A673 (cell line): ENCODE measurements at regions of chr10 and their contacts with region 1.

Region 1: DNA sequence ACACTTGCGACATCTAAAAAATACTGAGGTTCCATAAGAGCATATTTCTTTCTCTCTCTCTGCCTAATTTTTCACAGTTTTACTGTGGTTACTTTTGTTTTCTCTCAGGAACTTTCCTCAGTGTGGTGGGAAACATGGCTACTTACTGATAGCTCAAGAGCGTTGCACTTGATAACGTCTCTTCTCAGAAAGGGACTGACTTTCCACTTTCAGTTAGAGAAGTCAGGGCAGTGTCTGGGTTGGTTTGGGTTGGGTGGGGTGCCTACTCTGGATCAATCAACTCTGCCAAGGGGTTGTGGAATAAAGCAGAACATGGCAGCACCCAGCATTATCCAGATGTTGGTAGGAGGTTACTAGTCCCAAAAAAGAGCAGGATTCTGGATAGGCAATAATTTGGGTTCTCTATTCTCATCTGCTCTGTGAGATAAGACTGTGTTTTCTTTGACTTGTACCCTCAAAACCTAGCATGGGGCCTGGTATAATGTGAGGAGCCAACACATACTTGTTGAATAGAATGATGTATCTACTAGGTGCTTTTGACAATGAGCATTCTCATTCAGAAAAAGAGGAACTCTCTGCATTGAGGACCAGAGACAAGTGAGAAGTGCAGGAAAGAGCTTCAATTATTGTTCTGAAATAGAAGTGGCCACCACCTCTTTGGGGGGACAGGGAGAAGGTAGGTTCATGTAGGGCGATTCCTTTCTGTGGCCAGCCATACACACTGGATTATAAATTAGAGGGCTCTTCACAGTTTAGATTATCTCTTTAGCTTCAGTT is 315.7 kb downstream of the REEP3 start:
- DNase-seq: no peak
- H3K4me3 ChIP-seq: no peak overlapping the region
- H3K27ac ChIP-seq: no peak overlapping the region
- H3K4me1 ChIP-seq: no peaks in the 10 kb centered on the region
- H3K27me3 ChIP-seq: peaks cover 4% of the 10 kb centered on the region
- CTCF ChIP-seq: no peak

Region 2: DNA sequence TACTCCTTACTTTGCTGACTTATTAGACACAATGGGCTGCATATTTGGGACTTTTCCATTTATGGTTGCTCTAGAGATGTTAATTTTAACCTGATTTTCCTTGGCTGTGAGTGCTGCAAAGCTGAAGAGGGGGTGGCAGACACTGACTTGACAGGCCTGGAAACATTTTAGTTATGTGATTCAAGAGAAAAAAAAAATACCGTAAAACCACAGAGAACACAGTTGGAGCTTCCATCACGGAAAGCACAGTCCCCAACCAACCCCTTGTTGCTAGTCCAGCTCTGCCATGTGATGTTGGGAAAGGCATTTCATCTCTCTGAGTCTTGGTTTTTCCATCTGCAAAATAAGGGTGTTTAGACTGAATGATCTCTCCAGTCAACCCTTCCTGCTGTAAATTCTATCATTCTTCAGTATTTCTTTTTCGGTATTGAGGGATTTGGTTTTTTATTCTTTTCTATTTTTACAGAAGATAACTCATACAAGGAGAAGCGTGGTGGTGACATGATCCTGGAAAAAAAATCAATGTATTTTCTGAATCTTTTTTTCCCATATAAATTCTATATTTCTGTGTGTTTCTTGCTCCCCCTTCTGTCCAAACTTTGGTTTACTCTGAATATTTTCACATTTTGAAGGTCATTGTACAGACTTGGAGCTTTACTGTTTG is 69.6 kb before region 1 on chr10:
- CTCF ChIA-PET with region 1: no interaction called
- POLR2A ChIA-PET with region 1: no interaction called
- intact Hi-C with region 1: no loop called
- DNase-seq: peak; percentile 71
- H3K4me3 ChIP-seq: no peak overlapping the region
- H3K27ac ChIP-seq: no peak overlapping the region
- H3K4me1 ChIP-seq: peaks cover 32% of the 10 kb centered on the region
- H3K27me3 ChIP-seq: no peaks in the 10 kb centered on the region
- CTCF ChIP-seq: peak; percentile 70

Region 3: DNA sequence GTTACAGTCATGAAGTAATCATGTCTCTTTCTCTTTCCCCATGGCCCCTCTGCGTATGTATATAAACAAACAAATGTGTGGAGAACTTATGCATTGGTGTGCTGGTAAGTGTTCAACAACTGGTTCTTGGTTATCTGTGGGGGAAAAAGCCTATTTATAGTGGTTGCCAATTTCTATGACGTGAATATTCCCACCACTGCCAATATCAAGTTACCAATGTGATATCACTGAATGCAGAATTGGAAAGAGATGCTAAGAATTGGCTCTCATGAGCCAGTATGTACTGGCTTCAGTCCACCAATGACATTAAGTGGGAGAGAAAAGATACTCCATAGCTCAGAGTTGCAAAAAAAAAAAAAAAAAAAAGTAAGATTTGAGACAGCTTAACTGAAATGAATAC is 84.1 kb after region 1 on chr10:
- CTCF ChIA-PET with region 1: no interaction called
- POLR2A ChIA-PET with region 1: interaction called, 16 read pairs
- intact Hi-C with region 1: no loop called
- DNase-seq: no peak
- H3K4me3 ChIP-seq: no peak overlapping the region
- H3K27ac ChIP-seq: no peak overlapping the region
- H3K4me1 ChIP-seq: peaks cover 10% of the 10 kb centered on the region
- H3K27me3 ChIP-seq: no peaks in the 10 kb centered on the region
- CTCF ChIP-seq: no peak